Heart left ventricle (tissue), 16 donors: ENCODE measurements at regions of chr2 and their contacts with region 1.

Region 1: DNA sequence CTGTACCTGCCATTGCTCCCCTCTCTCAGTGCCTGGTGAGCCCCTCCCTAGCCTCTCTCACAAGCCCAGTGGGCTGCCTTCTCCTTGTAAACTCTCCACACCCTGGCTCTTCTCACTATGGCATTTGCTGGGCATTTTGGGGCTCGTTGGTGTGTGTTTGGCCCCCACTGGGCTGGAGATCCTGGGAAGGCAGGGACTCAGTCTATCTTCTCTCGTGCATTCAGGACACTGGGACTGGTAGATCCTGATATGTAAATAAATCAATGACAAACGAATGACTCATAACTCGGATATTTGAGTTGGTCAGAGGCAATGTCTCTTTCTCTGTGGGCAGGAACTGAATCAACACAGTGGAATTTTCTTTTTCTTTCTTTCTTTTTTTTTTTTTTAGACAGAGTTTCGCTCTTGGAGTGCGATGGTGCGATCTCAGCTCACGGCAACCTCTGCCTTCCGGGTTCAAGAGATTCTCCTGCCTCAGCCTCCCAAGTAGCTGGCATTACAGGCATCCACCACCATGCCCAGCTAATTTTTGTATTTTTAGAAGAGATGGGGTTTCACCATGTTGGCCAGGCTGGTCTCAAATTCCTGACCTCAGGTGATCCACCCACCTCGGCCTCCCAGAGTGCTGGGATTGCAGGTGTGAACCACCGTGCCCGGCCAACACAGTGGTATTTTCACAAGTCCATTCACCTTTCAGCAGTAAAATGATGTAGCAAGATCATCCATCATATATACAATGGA is 144.6 kb upstream of the SPRED2 start:
- DNase-seq: no peak
- ATAC-seq: peak in 1 of 4 donors; percentile 54
- H3K4me3 ChIP-seq: no peak overlapping the region
- H3K27ac ChIP-seq: no peak overlapping the region
- H3K4me1 ChIP-seq: peaks cover 0 to 17% (median 4%) of the 10 kb centered on the region in 12 donors
- H3K27me3 ChIP-seq: no peaks in the 10 kb centered on the region
- CTCF ChIP-seq: no peak
- POLR2A ChIP-seq: no peak

Region 2: DNA sequence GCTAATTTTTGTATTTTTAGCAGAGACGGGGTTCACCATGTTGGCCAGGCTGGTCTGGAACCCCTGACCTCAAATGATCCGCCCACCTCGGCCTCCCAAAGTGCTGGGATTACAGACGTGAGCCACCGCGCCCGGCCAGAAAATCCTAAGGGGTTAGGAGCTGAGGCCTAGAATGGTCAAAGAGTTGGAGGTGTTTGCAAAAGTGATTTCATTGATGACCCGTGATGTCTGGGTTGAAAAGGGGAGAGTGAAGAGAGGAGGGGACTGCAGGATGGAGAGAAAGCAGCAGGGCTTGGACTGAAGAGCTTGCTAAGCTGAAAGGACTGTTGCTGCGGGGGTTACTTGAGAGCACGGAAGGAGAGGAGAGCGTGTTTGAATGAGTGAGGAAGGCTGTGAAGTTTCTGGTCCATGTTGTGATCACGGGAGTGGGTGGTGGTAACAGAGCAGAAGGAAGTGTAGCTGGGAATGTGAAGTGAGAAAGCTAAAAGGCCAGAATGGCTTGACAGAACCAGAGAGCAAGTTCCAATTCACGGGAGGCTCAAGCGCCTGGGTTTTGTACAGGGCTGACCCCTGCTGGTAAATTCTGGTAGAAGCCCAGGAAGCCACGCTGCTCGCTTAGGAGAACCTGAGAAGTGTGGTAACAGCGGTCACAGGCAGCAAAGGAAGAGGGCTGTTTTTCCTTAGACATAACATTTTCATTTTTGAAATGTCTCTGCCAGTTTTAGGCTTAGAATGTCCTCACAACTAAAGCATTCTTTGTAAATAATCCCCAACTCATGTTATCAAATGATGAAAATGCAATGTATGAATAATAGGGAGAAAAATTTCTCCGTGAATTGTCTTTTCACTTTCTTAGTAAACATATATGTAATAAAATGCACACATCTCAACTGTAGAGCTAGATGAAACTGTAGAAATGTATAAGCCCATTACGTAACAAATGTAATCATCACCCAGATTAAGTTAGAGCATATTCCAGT is 389.9 kb before region 1 on chr2:
- intact Hi-C with region 1: loop called in 1 of 10 experiments (anchors 10 kb)
- DNase-seq: peak; percentile 65 to 77 (median 74)
- ATAC-seq: peak; percentile 66 to 98 (median 94)
- H3K4me3 ChIP-seq: no peak overlapping the region
- H3K27ac ChIP-seq: no peak overlapping the region
- H3K4me1 ChIP-seq: peaks cover 0 to 7% (median 0%) of the 10 kb centered on the region in 12 donors
- H3K27me3 ChIP-seq: no peaks in the 10 kb centered on the region
- CTCF ChIP-seq: peak; percentile 73 to 94 (median 80)
- POLR2A ChIP-seq: no peak

Region 3: DNA sequence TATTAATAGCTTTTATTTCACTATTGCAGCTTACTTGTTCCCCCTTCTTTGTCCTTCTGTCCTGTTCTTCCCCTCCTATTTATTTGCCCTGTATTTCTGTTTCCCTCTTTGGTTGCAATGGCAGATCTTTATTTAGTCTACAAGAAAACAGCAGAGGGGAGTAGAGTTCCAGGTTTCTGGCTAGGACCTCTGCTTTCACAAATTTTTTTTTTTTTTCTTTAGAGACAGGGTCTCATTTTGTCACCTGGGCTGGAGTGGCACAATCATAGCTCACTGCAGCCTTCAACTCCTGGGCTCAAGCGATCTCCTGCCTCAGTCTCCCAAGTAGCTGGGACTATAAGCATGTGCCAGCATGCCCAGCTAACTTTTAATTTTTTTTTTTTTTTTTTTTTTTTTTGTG is 43.5 kb after region 1 on chr2:
- intact Hi-C with region 1: no loop called
- DNase-seq: no peak
- ATAC-seq: no peak
- H3K4me3 ChIP-seq: no peak overlapping the region
- H3K27ac ChIP-seq: no peak overlapping the region
- H3K4me1 ChIP-seq: no peaks in the 10 kb centered on the region
- H3K27me3 ChIP-seq: peaks cover 0 to 11% (median 0%) of the 10 kb centered on the region in 9 donors
- CTCF ChIP-seq: no peak
- POLR2A ChIP-seq: no peak